Panc1 (cell line): ENCODE measurements at regions of chr19 and their contacts with region 1.

Region 1: GRCh38 chr19:3521104-3521445 is 15.0 kb downstream of the FZR1 start:
- DNase-seq: no peak
- ATAC-seq: no peak
- H3K4me3 ChIP-seq: no peak overlapping the region
- H3K27ac ChIP-seq: no peak overlapping the region
- H3K4me1 ChIP-seq: no peaks in the 10 kb centered on the region; the same call in 1 of the 2 replicates
- H3K27me3 ChIP-seq: no peaks in the 10 kb centered on the region
- CTCF ChIP-seq: no peak

Region 2: DNA sequence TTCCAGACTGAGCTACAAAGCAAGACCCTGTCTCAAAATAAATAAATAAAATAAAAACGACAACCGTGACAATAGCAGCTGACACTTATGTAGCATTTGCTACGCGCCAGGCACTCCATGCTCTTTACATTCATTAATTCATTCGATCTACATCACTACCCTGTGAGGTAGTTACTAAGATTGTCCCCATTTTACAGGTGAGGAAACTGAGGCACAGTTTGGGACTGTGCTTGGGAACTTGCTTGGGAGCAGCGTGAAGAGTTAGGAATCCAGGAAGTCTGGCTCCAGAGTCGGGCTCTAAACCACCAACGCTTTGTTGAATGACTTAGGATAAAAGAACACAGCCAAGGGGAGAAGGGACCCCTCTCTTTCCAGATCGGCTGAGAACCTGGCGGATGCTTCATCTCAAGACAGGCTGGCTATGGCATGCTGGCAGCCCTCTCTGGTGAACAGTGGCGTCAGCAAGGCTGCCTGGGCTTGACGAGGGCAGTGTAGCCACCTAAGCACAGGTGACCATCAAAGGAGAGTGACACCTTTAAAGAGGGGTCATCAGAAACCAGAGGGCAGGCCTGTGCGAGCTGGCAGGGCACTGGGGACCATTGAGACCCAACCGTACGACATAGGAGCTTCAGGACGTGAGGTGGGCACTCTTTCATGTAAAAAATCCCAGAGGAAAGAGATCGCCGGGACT is 21.2 kb before region 1 on chr19:
- CTCF ChIA-PET with region 1: no interaction called
- POLR2A ChIA-PET with region 1: interaction called, 18 read pairs
- in situ Hi-C with region 1: no loop called
- intact Hi-C with region 1: no loop called
- DNase-seq: no peak
- ATAC-seq: peak; percentile 36
- H3K4me3 ChIP-seq: peak overlapping the region; percentile 94 to 95
- H3K27ac ChIP-seq: peak overlapping the region; percentile 97
- H3K4me1 ChIP-seq: no peaks in the 10 kb centered on the region
- H3K27me3 ChIP-seq: no peaks in the 10 kb centered on the region
- CTCF ChIP-seq: no peak

Region 3: DNA sequence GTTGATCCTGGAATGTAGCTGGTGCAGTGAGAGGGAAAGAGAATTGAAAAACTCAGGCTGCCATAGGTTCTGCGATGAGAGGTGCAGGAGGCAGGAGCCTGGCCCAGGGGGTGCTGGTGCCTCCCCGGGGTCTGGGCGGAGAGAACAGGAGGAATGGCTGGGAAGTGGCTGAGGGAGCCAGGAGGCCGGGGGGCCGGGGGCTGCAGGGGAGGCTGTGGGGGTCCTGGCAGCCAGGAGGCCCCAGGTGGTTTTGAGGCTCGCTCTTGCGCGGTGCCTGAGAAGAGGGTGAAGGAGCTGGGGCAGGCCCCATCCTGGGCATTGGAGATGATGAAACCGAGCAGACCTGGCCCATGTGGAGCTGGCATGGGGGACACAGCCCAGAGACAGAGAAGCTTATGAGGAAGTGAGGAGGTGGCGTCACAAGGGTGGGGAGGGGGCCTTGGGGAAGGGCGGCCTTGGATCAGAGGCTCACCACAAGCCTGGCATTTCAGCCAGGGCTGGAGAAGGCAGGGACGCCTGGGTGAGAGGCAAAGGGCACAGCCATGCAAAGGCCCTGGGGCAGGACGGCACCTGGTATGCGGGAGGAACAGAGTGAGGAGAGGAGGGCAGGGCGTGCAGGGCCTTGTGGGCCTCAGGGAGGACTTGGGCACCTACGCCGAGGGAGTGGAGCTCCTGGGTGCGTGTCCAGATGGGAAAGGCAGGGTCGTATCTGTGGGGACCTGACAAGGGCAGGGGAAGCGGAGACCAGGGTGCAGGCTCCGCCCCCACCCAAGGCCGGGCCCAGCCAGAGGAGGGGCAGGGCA is 16.6 kb after region 1 on chr19:
- CTCF ChIA-PET with region 1: interaction called, 10 read pairs
- POLR2A ChIA-PET with region 1: no interaction called
- in situ Hi-C with region 1: no loop called
- intact Hi-C with region 1: no loop called
- DNase-seq: no peak
- ATAC-seq: peak; percentile 62
- H3K4me3 ChIP-seq: no peak overlapping the region
- H3K27ac ChIP-seq: no peak overlapping the region; the same call in 1 of the 2 replicates
- H3K4me1 ChIP-seq: peaks cover 7% of the 10 kb centered on the region; the same call in 1 of the 2 replicates
- H3K27me3 ChIP-seq: no peaks in the 10 kb centered on the region
- CTCF ChIP-seq: no peak

Region 4: GRCh38 chr19:3557461-3558248 is 36.6 kb after region 1 on chr19 and contains the start of gene MFSD12:
- CTCF ChIA-PET with region 1: no interaction called
- POLR2A ChIA-PET with region 1: no interaction called
- in situ Hi-C with region 1: no loop called
- intact Hi-C with region 1: no loop called
- DNase-seq: no peak
- ATAC-seq: peak; percentile 98
- H3K4me3 ChIP-seq: peak within 1 kb of the TSS; percentile 62 to 68
- H3K27ac ChIP-seq: peak within 1 kb of the TSS; percentile 72
- H3K4me1 ChIP-seq: peaks cover 11% of the 10 kb centered on the region
- H3K27me3 ChIP-seq: no peaks in the 10 kb centered on the region
- CTCF ChIP-seq: no peak
- total RNA-seq, gene MFSD12: 98.8 TPM

Region 5: DNA sequence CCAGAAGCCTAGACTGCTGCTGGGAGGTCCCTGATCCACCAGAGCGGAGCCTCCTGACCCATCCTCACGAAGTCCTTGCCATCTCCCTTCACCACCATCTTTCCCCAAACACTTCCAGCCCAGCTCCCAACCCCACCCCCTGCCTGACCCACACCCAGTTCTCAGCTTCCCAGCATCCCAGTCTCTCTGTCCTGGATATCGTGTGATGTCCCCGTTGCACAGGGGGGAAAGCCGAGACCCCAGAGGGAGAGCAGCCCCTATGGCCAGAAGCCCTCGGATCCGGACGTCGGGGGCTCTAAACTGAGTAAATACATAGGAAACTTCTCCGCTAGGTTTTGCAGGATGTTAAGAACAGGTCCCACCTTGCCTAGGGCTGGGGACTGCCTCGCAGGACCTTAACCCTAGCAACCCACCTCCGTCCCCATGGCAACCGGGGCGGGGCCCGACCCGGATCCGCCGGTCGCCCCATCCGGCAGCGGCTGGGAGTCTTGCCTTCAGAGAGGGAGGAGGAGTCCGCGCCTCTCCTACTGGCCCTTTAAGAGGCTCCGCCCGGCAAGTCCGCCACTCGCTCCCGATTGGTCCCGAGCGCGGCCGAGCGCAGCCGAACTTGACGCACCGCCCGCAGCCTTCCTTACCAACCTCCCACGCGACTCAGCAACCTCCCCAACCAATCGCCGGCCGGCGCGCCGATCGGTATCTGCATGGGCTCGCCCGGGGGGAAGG is 51.2 kb after region 1 on chr19:
- CTCF ChIA-PET with region 1: no interaction called
- POLR2A ChIA-PET with region 1: no interaction called
- in situ Hi-C with region 1: no loop called
- intact Hi-C with region 1: no loop called
- DNase-seq: peak; percentile 93
- ATAC-seq: peak; percentile 93
- H3K4me3 ChIP-seq: peak overlapping the region; percentile 54 to 74
- H3K27ac ChIP-seq: peak overlapping the region; percentile 78
- H3K4me1 ChIP-seq: peaks cover 4% of the 10 kb centered on the region; the same call in 1 of the 2 replicates
- H3K27me3 ChIP-seq: no peaks in the 10 kb centered on the region
- CTCF ChIP-seq: no peak